Activated B cell treated with CpG ODN at 0.5 μM for 24 hours (primary cell): ENCODE measurements at regions of chr2 and their contacts with region 1.

Region 1: DNA sequence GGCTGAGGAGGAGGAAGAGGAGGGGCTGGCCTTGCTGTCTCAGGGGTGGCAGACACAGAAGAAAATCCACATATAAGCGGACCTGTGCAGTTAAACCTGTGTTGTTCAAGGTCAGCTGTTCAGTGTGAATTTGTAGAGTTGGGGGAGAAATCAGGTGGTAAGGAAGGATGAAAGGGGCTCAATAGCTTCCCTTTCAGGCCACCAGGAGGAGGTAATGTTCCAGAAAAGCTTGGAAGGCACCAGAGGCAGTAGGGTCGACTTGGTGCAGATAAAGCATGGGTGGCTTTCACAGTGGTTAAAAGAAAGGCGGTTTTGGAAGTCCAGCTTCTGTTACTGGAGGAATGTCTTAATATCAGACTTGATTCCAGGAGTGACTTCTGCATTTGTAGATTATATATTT is 167.4 kb downstream of the THSD7B start:
- DNase-seq: no peak
- ATAC-seq: no peak
- H3K4me3 Mint-ChIP-seq: no peak overlapping the region
- H3K27ac Mint-ChIP-seq: no peak overlapping the region
- H3K4me1 Mint-ChIP-seq: no peaks in the 10 kb centered on the region
- H3K27me3 Mint-ChIP-seq: no peaks in the 10 kb centered on the region
- CTCF ChIP-seq: no peak

Region 2: GRCh38 chr2:137050949-137051348 is 118.2 kb after region 1 on chr2:
- CTCF ChIA-PET with region 1: no interaction called
- POLR2A ChIA-PET with region 1: no interaction called
- intact Hi-C with region 1: no loop called
- DNase-seq: no peak
- ATAC-seq: no peak
- H3K4me3 Mint-ChIP-seq: no peak overlapping the region
- H3K27ac Mint-ChIP-seq: no peak overlapping the region
- H3K4me1 Mint-ChIP-seq: no peaks in the 10 kb centered on the region
- H3K27me3 Mint-ChIP-seq: no peaks in the 10 kb centered on the region
- CTCF ChIP-seq: no peak

Region 3: DNA sequence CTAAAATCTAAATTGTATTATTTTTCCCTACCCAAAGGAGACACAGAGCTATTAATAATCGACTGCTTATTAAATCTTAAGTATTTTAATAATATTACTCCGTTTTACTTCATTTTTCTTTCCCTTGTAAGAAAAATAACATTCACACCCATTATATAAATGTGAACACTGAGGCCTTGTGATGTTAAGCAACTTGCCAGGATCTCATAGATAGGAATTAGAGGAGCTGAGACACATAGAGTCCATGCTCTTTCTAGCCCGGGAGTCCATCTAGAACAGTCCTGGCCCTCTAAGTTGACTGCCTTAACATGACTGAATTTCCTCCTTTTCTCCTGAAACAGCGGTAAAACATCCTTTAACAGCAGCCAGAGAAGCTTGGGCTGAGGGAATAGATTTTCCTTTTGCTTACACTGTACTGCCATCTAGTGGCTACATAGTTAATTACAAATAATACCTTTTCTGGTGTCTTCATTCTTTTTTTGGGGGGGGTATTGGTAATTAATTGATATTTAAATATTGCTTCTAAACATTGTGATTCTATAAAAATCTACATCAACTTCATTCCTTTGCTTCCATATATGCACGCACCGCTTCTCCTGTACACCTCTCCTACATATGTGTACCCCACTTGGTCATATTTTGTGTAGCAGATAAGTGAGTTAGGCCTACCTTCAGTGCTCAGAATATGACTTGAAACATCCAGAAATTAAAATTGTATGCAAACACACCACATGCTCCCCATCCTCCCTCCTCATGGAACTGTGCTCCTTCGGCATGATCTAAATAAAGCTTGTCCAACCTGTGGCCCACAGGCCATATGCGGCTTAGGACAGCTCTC is 905.8 kb after region 1 on chr2:
- CTCF ChIA-PET with region 1: no interaction called
- POLR2A ChIA-PET with region 1: no interaction called
- intact Hi-C with region 1: loop called (anchors 2 kb)
- DNase-seq: no peak
- ATAC-seq: no peak
- H3K4me3 Mint-ChIP-seq: no peak overlapping the region
- H3K27ac Mint-ChIP-seq: no peak overlapping the region
- H3K4me1 Mint-ChIP-seq: no peaks in the 10 kb centered on the region
- H3K27me3 Mint-ChIP-seq: peaks cover 2% of the 10 kb centered on the region
- CTCF ChIP-seq: no peak